Activated CD4-positive, alpha-beta memory T cell treated with anti-CD3 and anti-CD28 coated beads for 36 hours (primary cell): ENCODE measurements at regions of chr17 and their contacts with region 1.

Region 1: DNA sequence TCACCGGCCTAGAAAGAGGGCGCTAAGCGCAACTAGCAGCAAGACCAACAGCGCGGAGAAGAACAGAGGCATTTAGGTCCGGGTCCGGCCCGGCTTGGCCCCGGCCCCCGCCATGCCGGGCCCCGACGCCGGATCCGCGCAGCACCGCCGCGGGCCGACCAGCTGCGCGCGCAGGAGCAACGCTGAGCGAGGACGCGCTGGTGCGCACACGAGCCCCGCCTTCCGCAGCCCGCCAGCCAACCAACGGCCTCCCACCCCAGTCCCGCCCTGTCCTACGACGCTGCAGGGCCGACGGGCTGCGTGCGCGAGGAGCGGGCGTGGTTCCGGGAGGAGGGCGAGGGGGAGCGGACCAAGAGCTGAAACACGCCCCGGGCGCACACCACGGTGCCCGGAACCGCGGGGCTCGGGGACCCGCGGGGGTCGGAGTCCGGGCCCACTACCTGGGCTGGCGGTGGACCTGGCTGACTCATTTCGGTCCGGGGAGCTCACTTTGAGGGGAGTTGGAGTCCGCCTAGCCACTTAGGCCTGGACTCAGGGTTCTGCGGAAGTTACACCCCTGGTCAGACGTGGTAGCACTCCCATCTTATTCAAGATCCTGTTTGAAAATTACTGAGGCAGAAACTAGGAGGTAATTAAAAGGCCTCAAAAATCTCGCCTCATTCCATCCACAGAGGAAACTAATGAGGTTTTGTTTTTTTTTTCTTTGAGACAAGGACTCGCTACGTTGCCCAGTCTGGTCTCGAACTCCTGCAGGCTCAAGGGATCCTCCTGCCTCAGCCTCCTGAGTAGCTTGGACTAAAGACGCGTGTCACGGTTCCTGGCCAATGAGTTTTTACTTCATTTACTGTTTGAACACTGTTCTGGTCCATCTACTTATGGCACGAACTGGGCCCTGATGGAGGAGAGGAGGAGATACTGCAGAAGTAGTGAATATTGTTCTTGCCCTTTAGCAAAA is at the start of gene BLTP2:
- DNase-seq: peak; percentile 97
- H3K4me3 Mint-ChIP-seq: peak within 1 kb of the TSS; percentile 83
- H3K27ac Mint-ChIP-seq: peak within 1 kb of the TSS; percentile 86
- H3K4me1 Mint-ChIP-seq: peaks cover 39% of the 10 kb centered on the region
- H3K27me3 Mint-ChIP-seq: no peaks in the 10 kb centered on the region
- total RNA-seq, gene BLTP2: 127 to 133 TPM

Region 2: GRCh38 chr17:28552246-28552999 is 92.8 kb before region 1 on chr17 and contains the start of gene UNC119:
- CTCF ChIA-PET with region 1: no interaction called
- POLR2A ChIA-PET with region 1: no interaction called
- intact Hi-C with region 1: no loop called
- DNase-seq: peak; percentile 88
- H3K4me3 Mint-ChIP-seq: peak within 1 kb of the TSS; percentile 88
- H3K27ac Mint-ChIP-seq: peak within 1 kb of the TSS; percentile 65
- H3K4me1 Mint-ChIP-seq: peaks cover 49% of the 10 kb centered on the region
- H3K27me3 Mint-ChIP-seq: no peaks in the 10 kb centered on the region
- total RNA-seq, gene UNC119: 38.0 to 42.0 TPM

Region 3: DNA sequence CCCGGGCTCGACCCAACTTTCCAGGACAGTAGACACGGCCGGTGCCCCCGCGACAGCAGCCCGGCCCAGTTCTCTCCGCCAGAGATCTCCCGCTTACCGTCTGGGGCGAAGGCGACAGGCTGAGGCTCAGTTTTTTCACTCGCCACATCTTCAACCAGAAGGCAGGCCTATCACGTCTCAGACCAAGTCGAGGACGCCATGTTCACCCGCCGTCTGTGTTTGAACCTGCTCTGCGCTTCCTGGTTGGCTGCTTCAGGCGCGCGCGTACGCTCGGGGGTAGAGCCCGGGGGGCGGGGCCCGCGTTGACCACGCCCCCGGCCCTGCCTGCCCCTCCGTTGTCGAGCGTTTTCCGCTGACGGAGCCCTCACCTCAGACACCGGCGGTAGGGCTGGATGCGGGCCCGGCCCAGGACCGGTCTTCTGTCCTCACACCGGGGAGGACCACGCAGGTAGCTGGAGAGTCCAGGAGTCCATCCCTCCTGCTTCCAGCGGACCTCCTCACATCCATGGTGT is 46.4 kb before region 1 on chr17 and contains the start of gene SPAG5:
- CTCF ChIA-PET with region 1: interaction called, 6 read pairs
- POLR2A ChIA-PET with region 1: interaction called, 7 read pairs
- intact Hi-C with region 1: loop called (anchors 1 kb)
- DNase-seq: peak; percentile 97
- H3K4me3 Mint-ChIP-seq: peak within 1 kb of the TSS; percentile 93
- H3K27ac Mint-ChIP-seq: peak within 1 kb of the TSS; percentile 93
- H3K4me1 Mint-ChIP-seq: peaks cover 21% of the 10 kb centered on the region
- H3K27me3 Mint-ChIP-seq: no peaks in the 10 kb centered on the region
- total RNA-seq, gene SPAG5: 153 to 159 TPM

Region 4: DNA sequence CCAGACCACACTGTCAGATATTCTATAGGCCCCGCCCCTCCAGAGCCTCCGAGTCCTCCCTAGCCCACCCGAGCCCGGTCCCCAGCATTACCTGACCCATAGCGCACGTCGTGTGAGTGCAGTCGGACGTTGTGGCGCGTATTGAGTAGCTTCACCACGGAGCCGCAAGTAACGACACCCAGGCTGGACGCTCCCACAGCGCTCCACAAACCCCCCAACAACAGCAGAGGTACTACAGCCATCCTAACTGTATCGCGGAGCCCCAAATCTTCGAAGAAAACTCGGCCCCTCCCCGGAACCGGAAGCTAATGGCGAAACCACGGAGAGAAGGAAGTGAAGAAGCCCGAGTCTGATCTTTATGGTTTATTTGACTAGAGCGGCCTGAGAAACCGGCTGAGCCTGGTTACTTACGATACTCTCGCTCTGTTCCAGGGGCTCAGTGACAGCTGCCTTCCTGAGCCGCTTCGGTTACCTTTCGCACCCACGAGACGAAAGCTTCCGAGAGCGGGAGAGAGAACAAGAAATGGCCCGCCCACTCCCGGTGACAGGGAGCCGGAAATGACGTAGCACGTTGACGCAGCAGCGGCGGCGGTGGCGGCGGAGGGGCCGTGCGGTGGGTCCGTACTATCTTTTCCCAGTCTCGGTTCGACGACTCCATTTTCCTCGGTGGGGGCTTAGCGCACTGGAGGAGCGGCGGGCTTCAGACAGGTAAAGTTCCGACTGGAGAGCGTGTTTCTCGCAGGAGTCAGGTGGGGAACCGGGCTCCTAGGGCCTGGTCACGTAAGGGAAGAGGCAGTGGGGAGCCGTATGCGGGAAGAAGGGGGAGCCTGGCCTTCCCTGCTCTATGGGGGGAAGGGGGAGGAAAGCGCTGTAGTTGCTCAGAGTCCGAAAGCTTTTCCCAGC is 16.6 kb after region 1 on chr17 and contains the starts of genes SDF2 and SUPT6H:
- CTCF ChIA-PET with region 1: interaction called, 94 read pairs
- POLR2A ChIA-PET with region 1: interaction called, 32 read pairs
- intact Hi-C with region 1: loop called (anchors 1 kb)
- DNase-seq: peak; percentile 97
- H3K4me3 Mint-ChIP-seq: peak within 1 kb of the TSS; percentile 97
- H3K27ac Mint-ChIP-seq: peak within 1 kb of the TSS; percentile 97
- H3K4me1 Mint-ChIP-seq: peaks cover 43% of the 10 kb centered on the region
- H3K27me3 Mint-ChIP-seq: no peaks in the 10 kb centered on the region
- total RNA-seq, gene SDF2: 38.4 to 43.5 TPM
- total RNA-seq, gene SUPT6H: 59.4 to 65.9 TPM

Region 5: DNA sequence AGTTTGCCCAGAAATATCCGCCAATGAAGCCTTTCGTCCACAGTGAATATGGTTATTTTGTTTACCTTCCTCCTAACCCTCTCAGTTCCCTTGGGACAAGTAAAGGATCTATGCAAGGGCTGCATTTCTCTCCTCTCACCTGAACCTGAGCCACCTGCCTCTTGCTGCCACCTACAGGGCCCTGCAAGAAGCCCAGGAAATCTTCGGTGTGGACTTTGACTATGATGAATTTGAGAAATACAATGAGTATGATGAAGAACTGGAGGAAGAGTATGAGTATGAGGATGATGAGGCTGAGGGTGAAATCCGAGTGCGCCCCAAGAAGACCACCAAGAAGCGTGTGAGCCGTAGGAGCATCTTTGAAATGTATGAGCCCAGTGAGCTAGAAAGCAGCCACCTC is 30.7 kb after region 1 on chr17:
- CTCF ChIA-PET with region 1: interaction called, 19 read pairs
- POLR2A ChIA-PET with region 1: interaction called, 3 read pairs
- intact Hi-C with region 1: loop called (anchors 2 kb)
- DNase-seq: peak; percentile 20
- H3K4me3 Mint-ChIP-seq: no peak overlapping the region
- H3K27ac Mint-ChIP-seq: no peak overlapping the region
- H3K4me1 Mint-ChIP-seq: no peaks in the 10 kb centered on the region
- H3K27me3 Mint-ChIP-seq: no peaks in the 10 kb centered on the region

Region 6: GRCh38 chr17:28717578-28718333 is 72.5 kb after region 1 on chr17 and contains the start of gene RAB34:
- CTCF ChIA-PET with region 1: interaction called, 9 read pairs
- POLR2A ChIA-PET with region 1: interaction called, 13 read pairs
- intact Hi-C with region 1: no loop called
- DNase-seq: peak; percentile 20
- H3K4me3 Mint-ChIP-seq: peak within 1 kb of the TSS; percentile 14
- H3K27ac Mint-ChIP-seq: peak within 1 kb of the TSS; percentile 71
- H3K4me1 Mint-ChIP-seq: peaks cover 30% of the 10 kb centered on the region
- H3K27me3 Mint-ChIP-seq: peaks cover 16% of the 10 kb centered on the region
- total RNA-seq, gene RAB34: 4.9 to 6.6 TPM

Region 7: GRCh38 chr17:29111816-29112499 is 466.7 kb after region 1 on chr17:
- CTCF ChIA-PET with region 1: interaction called, 5 read pairs
- POLR2A ChIA-PET with region 1: no interaction called
- intact Hi-C with region 1: loop called (anchors 10 kb)
- DNase-seq: peak; percentile 80
- H3K4me3 Mint-ChIP-seq: no peak overlapping the region
- H3K27ac Mint-ChIP-seq: no peak overlapping the region
- H3K4me1 Mint-ChIP-seq: peaks cover 2% of the 10 kb centered on the region
- H3K27me3 Mint-ChIP-seq: no peaks in the 10 kb centered on the region